ENCODE measurements at regions of chr2 and their contacts with region 1.

Region 1: GRCh38 chr2:157946919-157947557 is 70.9 kb upstream of the ACVR1 start:
- DNase-seq: no peak
- ATAC-seq: no peak
- H3K4me3 Mint-ChIP-seq: no peak overlapping the region
- H3K27ac Mint-ChIP-seq: no peak overlapping the region
- H3K4me1 Mint-ChIP-seq: no peaks in the 10 kb centered on the region
- H3K27me3 Mint-ChIP-seq: no peaks in the 10 kb centered on the region

Region 2: DNA sequence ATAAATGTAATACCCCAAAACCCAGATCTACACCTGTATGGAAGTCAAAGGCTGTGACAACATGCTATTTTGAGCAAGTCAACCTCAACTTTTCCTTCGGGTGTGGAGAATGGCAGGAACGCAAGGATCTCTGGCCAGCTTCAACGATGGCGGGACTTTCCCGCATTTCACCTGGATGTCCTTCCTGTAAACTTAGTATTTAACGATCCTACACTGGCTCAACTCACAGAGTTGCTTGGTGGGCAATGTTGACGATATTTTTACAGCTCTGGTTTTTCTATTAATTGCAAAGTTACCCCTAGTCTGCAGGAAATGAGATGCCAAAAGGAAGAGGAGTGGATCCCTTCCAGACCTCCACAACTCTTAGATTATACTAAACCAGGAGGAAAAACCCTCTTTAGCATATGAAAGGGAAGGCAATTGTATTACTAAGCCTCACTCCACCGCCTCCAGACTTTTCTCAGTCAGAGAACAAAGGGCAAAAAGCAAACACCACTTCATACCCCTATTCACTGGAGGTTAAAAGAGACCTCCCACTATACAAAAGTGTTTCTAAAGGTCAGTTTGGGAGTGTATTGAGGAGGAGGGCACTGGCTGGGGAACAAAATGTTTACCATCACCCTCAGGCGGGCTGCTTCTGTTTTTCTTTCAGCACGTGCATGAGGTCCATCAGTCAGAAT is 14.4 kb before region 1 on chr2:
- CTCF ChIA-PET with region 1: interaction called, 13 read pairs
- POLR2A ChIA-PET with region 1: no interaction called
- intact Hi-C with region 1: no loop called
- DNase-seq: no peak
- ATAC-seq: no peak
- H3K4me3 Mint-ChIP-seq: no peak overlapping the region
- H3K27ac Mint-ChIP-seq: no peak overlapping the region
- H3K4me1 Mint-ChIP-seq: peaks cover 12% of the 10 kb centered on the region
- H3K27me3 Mint-ChIP-seq: no peaks in the 10 kb centered on the region

Measured in activated CD4-positive, alpha-beta T cell treated with anti-CD3 and anti-CD28 coated beads for 36 hours (primary cell).